GM10248 (cell line): ENCODE measurements at regions of chr2 and their contacts with region 1.

Region 1: DNA sequence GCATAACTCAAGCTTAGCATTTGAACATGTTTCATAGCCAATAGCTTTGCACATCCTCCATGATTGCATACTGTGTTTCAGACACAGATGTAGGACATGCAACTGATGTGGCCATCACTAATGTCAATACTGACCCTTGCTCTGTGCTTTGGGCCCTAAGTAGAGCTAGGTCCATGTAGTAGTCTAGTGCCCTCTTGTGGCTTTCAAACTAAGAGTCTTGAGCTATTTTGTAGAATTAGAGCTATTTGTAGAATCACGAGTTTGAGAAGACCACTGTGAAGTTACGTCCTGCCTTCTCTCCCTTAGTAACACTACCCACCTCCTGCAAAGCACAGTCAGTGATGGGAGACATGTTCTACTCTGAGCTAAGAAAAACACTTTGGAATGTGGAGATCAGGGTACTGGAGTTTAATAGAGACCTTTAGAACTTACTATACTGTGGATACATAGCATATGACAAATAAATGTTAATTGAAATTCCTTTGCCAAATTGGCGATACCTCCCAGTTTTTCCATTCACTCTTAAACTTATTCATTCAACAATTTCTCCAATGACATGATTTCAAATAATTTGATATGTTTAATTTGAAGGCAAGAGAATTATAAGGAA is 306.5 kb upstream of the TNP1 start:
- DNase-seq: no peak
- CTCF ChIP-seq: peak; percentile 46

Region 2: GRCh38 chr2:216888907-216889622 is 277.3 kb before region 1 on chr2:
- CTCF ChIA-PET with region 1: no interaction called
- POLR2A ChIA-PET with region 1: no interaction called
- DNase-seq: no peak
- CTCF ChIP-seq: no peak

Region 3: GRCh38 chr2:217223222-217223930 is 57.0 kb after region 1 on chr2:
- CTCF ChIA-PET with region 1: interaction called, 14 read pairs
- POLR2A ChIA-PET with region 1: no interaction called
- DNase-seq: peak; percentile 62
- CTCF ChIP-seq: no peak